Activated CD4-positive, alpha-beta T cell treated with anti-CD3 and anti-CD28 coated beads for 36 hours (primary cell): ENCODE measurements at regions of chr11 and their contacts with region 1.

Region 1: GRCh38 chr11:9748361-9748970 is 84.6 kb downstream of the SWAP70 start:
- DNase-seq: peak; percentile 81
- ATAC-seq: peak; percentile 99
- H3K4me3 Mint-ChIP-seq: no peak overlapping the region
- H3K27ac Mint-ChIP-seq: no peak overlapping the region
- H3K4me1 Mint-ChIP-seq: peaks cover 20% of the 10 kb centered on the region
- H3K27me3 Mint-ChIP-seq: no peaks in the 10 kb centered on the region

Region 2: DNA sequence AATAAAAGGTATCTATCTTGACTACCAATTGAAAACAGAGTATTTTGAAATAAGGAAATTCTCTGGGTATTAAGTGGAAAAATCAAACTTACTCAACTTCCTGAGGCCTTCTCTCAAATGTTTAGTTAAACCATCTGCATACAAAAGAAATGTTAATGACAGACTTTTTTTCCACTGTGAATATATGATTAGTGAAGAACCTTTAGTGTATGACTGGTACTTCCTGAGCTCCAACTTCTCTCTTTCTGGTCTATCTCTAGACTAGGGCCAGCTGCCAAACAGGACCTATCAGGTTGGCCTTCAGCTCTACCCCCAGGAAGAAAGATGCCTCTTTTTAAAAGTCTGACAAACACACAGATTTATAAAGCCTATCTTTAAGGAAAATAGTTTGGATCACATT is 588.3 kb before region 1 on chr11:
- CTCF ChIA-PET with region 1: no interaction called
- POLR2A ChIA-PET with region 1: no interaction called
- intact Hi-C with region 1: loop called in 1 of 2 experiments (anchors 10 kb)
- DNase-seq: no peak
- ATAC-seq: peak; percentile 74
- H3K4me3 Mint-ChIP-seq: no peak overlapping the region
- H3K27ac Mint-ChIP-seq: peak overlapping the region; percentile 75
- H3K4me1 Mint-ChIP-seq: peaks cover 22% of the 10 kb centered on the region
- H3K27me3 Mint-ChIP-seq: no peaks in the 10 kb centered on the region

Region 3: GRCh38 chr11:9534791-9535781 is 213.4 kb before region 1 on chr11:
- CTCF ChIA-PET with region 1: interaction called, 69 read pairs
- POLR2A ChIA-PET with region 1: no interaction called
- intact Hi-C with region 1: loop called (anchors 1 kb)
- DNase-seq: peak; percentile 91
- ATAC-seq: peak; percentile 71
- H3K4me3 Mint-ChIP-seq: no peak overlapping the region
- H3K27ac Mint-ChIP-seq: no peak overlapping the region
- H3K4me1 Mint-ChIP-seq: no peaks in the 10 kb centered on the region
- H3K27me3 Mint-ChIP-seq: no peaks in the 10 kb centered on the region

Region 4: GRCh38 chr11:9601037-9601875 is 147.2 kb before region 1 on chr11:
- CTCF ChIA-PET with region 1: interaction called, 13 read pairs
- POLR2A ChIA-PET with region 1: no interaction called
- intact Hi-C with region 1: no loop called
- DNase-seq: peak; percentile 86
- ATAC-seq: peak; percentile 89
- H3K4me3 Mint-ChIP-seq: peak overlapping the region; percentile 65
- H3K27ac Mint-ChIP-seq: peak overlapping the region; percentile 91
- H3K4me1 Mint-ChIP-seq: peaks cover 25% of the 10 kb centered on the region
- H3K27me3 Mint-ChIP-seq: no peaks in the 10 kb centered on the region

Region 5: GRCh38 chr11:9663699-9664275 is 84.7 kb before region 1 on chr11 and contains the start of gene SWAP70:
- CTCF ChIA-PET with region 1: no interaction called
- POLR2A ChIA-PET with region 1: no interaction called
- intact Hi-C with region 1: loop called in 1 of 2 experiments (anchors 1 kb)
- DNase-seq: peak; percentile 85
- ATAC-seq: peak; percentile 94
- H3K4me3 Mint-ChIP-seq: peak within 1 kb of the TSS; percentile 79
- H3K27ac Mint-ChIP-seq: peak within 1 kb of the TSS; percentile 42
- H3K4me1 Mint-ChIP-seq: peaks cover 11% of the 10 kb centered on the region
- H3K27me3 Mint-ChIP-seq: peaks cover 24% of the 10 kb centered on the region
- total RNA-seq, gene SWAP70: 7.5 to 9.7 TPM